ENCODE measurements at regions of chr10 and their contacts with region 1.

Region 1: DNA sequence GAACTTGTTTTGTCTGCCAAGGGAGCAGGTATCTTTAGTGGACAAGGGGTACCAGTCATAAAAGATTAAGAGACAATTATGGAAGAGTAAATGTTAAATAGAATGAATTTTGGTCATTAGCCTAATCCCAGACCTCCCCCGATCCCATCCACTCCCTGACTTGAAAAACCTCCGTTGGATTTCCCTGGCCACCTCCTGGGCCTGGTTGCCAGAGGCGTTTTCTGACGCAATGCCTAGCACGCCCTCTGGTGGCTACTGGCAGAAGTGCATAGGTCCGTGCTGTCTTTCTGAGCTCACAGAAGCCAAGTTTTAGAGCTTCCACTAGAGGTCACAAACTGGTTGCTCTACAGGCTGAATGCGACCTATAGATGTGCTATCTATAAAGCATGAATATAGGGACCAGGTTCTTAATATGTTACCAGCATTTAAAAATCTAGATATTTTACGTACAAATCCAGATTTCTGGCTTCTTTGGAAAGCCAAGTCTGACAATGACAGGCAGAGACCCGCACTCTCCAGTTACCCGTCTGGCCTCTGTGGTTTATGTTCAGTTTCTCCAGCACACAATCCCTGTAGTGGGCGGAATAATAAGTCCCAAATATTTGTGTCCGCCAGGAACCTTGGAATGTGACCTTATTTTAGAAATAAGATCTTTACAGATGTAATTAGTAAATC is 39.8 kb downstream of the SPOCK2 start:
- DNase-seq: peak; percentile 93
- H3K4me3 Mint-ChIP-seq: no peak overlapping the region
- H3K27ac Mint-ChIP-seq: peak overlapping the region; percentile 63
- H3K4me1 Mint-ChIP-seq: peaks cover 15% of the 10 kb centered on the region
- H3K27me3 Mint-ChIP-seq: no peaks in the 10 kb centered on the region
- CTCF ChIP-seq: peak; percentile 98

Region 2: GRCh38 chr10:71916827-71917226 is 131.8 kb before region 1 on chr10:
- CTCF ChIA-PET with region 1: interaction called, 11 read pairs
- POLR2A ChIA-PET with region 1: no interaction called
- intact Hi-C with region 1: loop called (anchors 1 kb)
- DNase-seq: no peak
- H3K4me3 Mint-ChIP-seq: no peak overlapping the region
- H3K27ac Mint-ChIP-seq: no peak overlapping the region
- H3K4me1 Mint-ChIP-seq: peaks cover 11% of the 10 kb centered on the region
- H3K27me3 Mint-ChIP-seq: no peaks in the 10 kb centered on the region
- CTCF ChIP-seq: no peak

Region 3: GRCh38 chr10:71963756-71964668 is 84.6 kb before region 1 on chr10 and contains the start of gene CHST3:
- CTCF ChIA-PET with region 1: interaction called, 95 read pairs
- POLR2A ChIA-PET with region 1: interaction called, 17 read pairs
- intact Hi-C with region 1: loop called (anchors 2 kb)
- DNase-seq: peak; percentile 55
- H3K4me3 Mint-ChIP-seq: peak within 1 kb of the TSS; percentile 83
- H3K27ac Mint-ChIP-seq: peak within 1 kb of the TSS; percentile 81
- H3K4me1 Mint-ChIP-seq: peaks cover 33% of the 10 kb centered on the region
- H3K27me3 Mint-ChIP-seq: no peaks in the 10 kb centered on the region
- CTCF ChIP-seq: no peak
- total RNA-seq, gene CHST3: 28.7 and 29.3 TPM in 2 replicates

Region 4: DNA sequence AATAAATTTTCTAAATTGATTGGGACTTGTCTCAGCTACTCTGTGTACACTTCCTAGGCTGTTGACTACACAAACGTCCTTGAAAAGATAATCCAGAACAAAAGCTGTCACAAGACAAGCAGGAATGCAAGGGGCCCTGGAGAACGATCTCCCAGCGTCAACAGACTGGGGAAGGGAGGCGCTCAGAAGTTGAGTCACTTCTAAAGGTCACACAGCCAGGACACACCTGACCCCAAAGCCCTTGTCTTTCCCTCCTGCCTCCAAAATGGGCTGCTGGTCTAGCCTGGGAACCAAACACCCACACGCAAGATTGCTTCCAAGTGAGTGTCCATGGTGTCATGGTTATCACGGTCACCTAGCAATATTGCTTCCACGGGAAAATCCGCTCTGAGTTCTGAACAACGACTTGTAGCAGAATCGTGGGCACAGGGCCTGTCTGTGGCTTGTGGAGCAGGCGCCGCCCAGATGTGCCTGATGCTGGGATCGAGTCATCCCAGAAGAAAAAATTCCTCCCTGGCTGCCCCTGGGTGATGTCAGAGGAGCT is 10.1 kb before region 1 on chr10:
- CTCF ChIA-PET with region 1: no interaction called
- POLR2A ChIA-PET with region 1: no interaction called
- intact Hi-C with region 1: no loop called
- DNase-seq: no peak
- H3K4me3 Mint-ChIP-seq: no peak overlapping the region
- H3K27ac Mint-ChIP-seq: no peak overlapping the region
- H3K4me1 Mint-ChIP-seq: no peaks in the 10 kb centered on the region
- H3K27me3 Mint-ChIP-seq: no peaks in the 10 kb centered on the region
- CTCF ChIP-seq: no peak

Region 5: GRCh38 chr10:72073708-72074573 is 25.4 kb after region 1 on chr10:
- CTCF ChIA-PET with region 1: interaction called, 11 read pairs
- POLR2A ChIA-PET with region 1: interaction called, 3 read pairs
- intact Hi-C with region 1: no loop called
- DNase-seq: no peak
- H3K4me3 Mint-ChIP-seq: no peak overlapping the region
- H3K27ac Mint-ChIP-seq: no peak overlapping the region
- H3K4me1 Mint-ChIP-seq: peaks cover 4% of the 10 kb centered on the region
- H3K27me3 Mint-ChIP-seq: no peaks in the 10 kb centered on the region
- CTCF ChIP-seq: no peak

Region 6: GRCh38 chr10:72097448-72098300 is 49.1 kb after region 1 on chr10:
- CTCF ChIA-PET with region 1: no interaction called
- POLR2A ChIA-PET with region 1: no interaction called
- intact Hi-C with region 1: no loop called
- DNase-seq: peak; percentile 39
- H3K4me3 Mint-ChIP-seq: no peak overlapping the region
- H3K27ac Mint-ChIP-seq: no peak overlapping the region
- H3K4me1 Mint-ChIP-seq: peaks cover 14% of the 10 kb centered on the region
- H3K27me3 Mint-ChIP-seq: no peaks in the 10 kb centered on the region
- CTCF ChIP-seq: no peak

Region 7: GRCh38 chr10:72337020-72337629 is 288.5 kb after region 1 on chr10:
- CTCF ChIA-PET with region 1: interaction called, 13 read pairs
- POLR2A ChIA-PET with region 1: interaction called, 4 read pairs
- intact Hi-C with region 1: loop called (anchors 1 kb)
- DNase-seq: peak; percentile 93
- H3K4me3 Mint-ChIP-seq: peak overlapping the region; percentile 72
- H3K27ac Mint-ChIP-seq: peak overlapping the region; percentile 79
- H3K4me1 Mint-ChIP-seq: peaks cover 42% of the 10 kb centered on the region
- H3K27me3 Mint-ChIP-seq: no peaks in the 10 kb centered on the region
- CTCF ChIP-seq: peak; percentile 96

Measured in MCF 10A (cell line).